ENCODE measurements at regions of chr2 and their contacts with region 1.

Region 1: DNA sequence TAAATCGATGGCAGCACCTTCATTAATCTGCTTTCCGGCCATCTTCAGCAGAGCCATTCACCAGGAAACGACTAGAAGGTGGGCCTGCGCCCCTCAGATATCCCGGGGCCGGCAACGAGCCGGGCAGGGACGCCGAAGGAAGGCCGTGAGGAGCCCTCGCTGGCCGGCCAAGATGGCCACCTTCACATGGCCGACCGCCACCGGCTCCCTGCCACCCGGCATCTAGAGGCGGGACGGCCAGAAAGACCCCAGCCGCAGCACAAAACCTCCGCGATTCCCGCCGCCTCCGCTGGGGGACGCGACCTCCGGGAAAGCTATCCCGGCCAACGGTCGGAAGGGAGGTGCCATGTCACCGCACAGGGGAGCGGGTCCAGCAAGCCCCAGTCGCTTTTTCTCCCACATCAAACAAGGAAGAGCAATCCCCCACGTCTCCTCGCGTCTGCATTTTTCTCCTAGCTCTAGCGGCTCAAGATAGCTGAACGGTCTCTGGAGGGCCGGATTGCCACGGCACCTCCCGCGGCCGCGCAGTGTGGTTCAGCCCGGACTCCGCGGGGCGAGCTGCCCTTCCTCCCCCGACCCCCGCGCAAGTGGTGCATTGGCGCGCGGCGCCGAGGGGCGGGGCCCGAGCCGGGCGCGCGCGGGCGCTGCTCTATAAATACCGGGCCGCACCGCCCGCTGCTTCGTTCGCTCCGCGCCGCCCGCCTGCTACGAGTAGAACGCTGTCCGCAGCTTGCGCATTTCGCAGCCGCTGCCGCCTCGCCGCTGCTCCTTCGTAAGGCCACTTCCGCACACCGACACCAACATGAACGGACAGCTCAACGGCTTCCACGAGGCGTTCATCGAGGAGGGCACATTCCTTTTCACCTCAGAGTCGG is at the start of gene MAT2A:
- DNase-seq: peak; percentile 98
- ATAC-seq: peak; percentile 77
- H3K4me3 Mint-ChIP-seq: peak within 1 kb of the TSS; percentile 97
- H3K27ac Mint-ChIP-seq: peak within 1 kb of the TSS; percentile 99
- H3K4me1 Mint-ChIP-seq: peaks cover 50% of the 10 kb centered on the region
- H3K27me3 Mint-ChIP-seq: no peaks in the 10 kb centered on the region
- CTCF ChIP-seq: peak; percentile 45
- total RNA-seq, gene MAT2A: 208 to 222 TPM (median 208 TPM) in 3 replicates

Region 2: DNA sequence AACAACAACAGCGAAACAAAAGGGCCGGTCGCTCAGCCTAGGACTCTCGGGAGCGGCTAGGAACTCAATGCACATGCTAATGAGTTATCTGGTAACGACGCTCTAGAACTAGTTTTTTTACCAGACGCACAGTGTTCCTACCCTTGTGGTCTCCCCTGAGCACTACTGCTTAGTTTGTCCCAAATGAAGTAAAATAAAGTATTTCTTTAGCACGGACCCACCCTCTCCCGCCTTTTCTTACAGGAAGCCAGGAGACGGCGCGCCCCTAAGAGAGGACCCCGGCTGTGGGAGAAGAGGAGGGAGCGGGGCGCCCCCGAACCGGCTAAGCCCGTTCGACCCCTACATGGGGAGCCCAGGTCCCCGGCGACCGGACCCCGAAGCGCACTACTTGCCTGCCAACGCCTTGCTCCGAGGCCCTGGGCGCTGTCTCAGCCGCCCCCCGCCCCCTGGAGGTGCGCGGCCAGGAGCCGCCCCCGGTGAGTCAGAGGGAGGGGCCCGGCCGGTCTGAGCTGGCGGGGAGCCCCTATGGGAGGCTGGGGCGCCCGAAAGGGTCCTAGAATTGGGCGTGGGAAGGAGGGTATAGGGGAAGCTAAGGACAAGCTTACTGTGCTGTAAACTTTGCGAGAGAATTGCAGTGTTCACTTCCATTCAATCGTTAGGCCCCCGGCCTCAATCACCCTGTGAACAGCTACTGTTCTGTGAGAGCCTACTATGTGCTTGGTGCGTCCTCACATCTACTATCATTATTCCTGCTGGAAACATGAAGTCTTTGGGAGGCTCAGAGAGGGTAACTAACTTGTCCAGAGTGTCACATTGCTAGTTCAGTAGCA is 124.9 kb before region 1 on chr2:
- CTCF ChIA-PET with region 1: interaction called, 15 read pairs
- POLR2A ChIA-PET with region 1: interaction called, 36 read pairs
- DNase-seq: peak; percentile 58
- ATAC-seq: peak; percentile 36
- H3K4me3 Mint-ChIP-seq: peak overlapping the region; percentile 93
- H3K27ac Mint-ChIP-seq: peak overlapping the region; percentile 92
- H3K4me1 Mint-ChIP-seq: peaks cover 43% of the 10 kb centered on the region
- H3K27me3 Mint-ChIP-seq: no peaks in the 10 kb centered on the region
- CTCF ChIP-seq: no peak

Region 3: GRCh38 chr2:85430752-85431569 is 107.8 kb before region 1 on chr2:
- CTCF ChIA-PET with region 1: interaction called, 7 read pairs
- POLR2A ChIA-PET with region 1: interaction called, 54 read pairs
- DNase-seq: peak; percentile 88
- ATAC-seq: peak; percentile 80
- H3K4me3 Mint-ChIP-seq: peak overlapping the region; percentile 48
- H3K27ac Mint-ChIP-seq: no peak overlapping the region; the same call in 1 of the 2 replicates
- H3K4me1 Mint-ChIP-seq: peaks cover 57% of the 10 kb centered on the region
- H3K27me3 Mint-ChIP-seq: peaks cover 21% of the 10 kb centered on the region
- CTCF ChIP-seq: no peak

Region 4: DNA sequence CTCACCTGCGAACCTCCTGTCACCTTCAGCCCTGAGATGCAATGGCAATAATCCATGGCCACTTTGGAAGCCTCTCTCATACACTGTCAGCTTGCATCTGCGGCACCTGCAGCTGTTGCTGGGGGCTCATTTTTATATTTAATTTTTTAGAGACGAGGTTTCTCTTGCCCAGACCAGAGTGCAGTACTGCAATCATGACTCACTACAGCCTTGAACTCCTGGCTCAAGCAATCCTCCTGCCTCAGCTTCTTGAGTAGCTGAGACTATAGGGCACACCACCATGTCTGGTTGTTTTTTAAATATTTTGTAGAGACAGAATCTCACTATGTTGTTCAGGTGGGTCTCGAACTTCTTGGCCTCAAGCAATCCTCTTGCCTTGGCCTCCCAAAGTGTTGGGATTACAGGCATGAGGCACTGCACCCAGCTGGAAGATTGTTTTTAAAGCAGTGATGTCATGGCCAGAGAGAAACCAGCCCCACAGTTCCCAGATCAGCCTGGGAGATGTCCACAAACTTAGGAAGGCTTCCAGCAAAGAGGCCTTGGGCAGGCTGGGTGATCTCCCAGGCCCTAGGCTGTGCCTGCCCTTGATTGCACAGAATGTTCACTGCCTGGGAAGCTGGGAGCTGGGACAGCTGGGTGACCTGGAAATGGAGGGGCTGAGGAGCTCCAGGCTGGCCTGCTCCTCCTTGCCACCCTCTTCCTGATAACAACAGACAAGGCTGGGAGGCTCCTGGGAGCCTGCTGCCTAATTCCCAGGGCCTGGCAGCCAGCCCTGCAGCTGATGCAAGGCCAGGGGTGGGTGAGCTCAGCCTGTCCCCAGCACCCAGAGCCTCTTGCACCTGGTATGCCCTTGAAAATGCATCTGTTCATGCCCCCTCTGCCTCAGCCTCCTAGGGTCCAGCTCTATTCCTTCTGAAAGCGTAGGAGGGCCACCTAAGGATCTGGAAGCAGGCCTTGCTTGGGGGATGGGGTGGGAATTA is 93.1 kb before region 1 on chr2:
- CTCF ChIA-PET with region 1: no interaction called
- POLR2A ChIA-PET with region 1: interaction called, 10 read pairs
- DNase-seq: no peak
- ATAC-seq: no peak
- H3K4me3 Mint-ChIP-seq: no peak overlapping the region
- H3K27ac Mint-ChIP-seq: no peak overlapping the region
- H3K4me1 Mint-ChIP-seq: peaks cover 4% of the 10 kb centered on the region
- H3K27me3 Mint-ChIP-seq: no peaks in the 10 kb centered on the region
- CTCF ChIP-seq: no peak

Region 5: GRCh38 chr2:85501248-85501647 is 37.5 kb before region 1 on chr2:
- CTCF ChIA-PET with region 1: no interaction called
- POLR2A ChIA-PET with region 1: interaction called, 11 read pairs
- DNase-seq: peak; percentile 28
- ATAC-seq: peak; percentile 95
- H3K4me3 Mint-ChIP-seq: no peak overlapping the region
- H3K27ac Mint-ChIP-seq: no peak overlapping the region
- H3K4me1 Mint-ChIP-seq: peaks cover 8% of the 10 kb centered on the region
- H3K27me3 Mint-ChIP-seq: no peaks in the 10 kb centered on the region
- CTCF ChIP-seq: no peak

Region 6: DNA sequence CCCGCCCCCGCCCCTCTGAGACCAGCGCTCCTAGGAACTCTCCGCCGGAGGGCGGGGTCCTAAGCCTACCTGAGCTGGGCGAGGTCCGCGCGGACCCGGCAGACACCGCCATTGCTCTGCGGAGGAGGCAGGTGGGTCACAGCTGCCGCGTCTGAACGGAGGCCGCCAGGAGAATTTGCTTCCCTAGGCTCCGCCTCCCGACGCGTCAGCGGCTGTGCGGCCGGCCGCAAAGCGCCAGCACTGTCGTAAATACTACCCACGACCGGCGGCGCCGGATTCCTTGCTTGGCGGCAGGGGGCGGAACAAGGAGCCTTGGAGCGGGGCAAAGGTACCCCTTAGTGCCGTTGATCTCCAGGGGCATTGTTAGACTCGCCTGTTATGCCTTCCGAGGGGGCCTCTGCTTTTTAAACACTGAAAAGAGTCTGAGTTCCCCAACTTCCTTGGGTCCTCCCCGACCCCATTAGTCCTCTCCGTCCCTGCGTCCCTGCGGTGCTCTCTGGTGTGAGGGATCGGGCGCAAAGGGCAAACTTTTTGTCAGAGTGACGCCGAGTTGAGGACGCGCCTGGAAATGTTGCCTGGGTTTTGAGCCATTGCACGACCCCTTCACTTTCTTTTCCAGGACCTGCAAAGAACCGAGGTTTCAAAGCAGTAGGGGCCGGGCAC is 22.7 kb after region 1 on chr2 and contains the start of gene GGCX:
- CTCF ChIA-PET with region 1: no interaction called
- POLR2A ChIA-PET with region 1: interaction called, 19 read pairs
- DNase-seq: peak; percentile 98
- ATAC-seq: peak; percentile 97
- H3K4me3 Mint-ChIP-seq: peak within 1 kb of the TSS; percentile 94
- H3K27ac Mint-ChIP-seq: peak within 1 kb of the TSS; percentile 98
- H3K4me1 Mint-ChIP-seq: peaks cover 6% of the 10 kb centered on the region
- H3K27me3 Mint-ChIP-seq: peaks cover 7% of the 10 kb centered on the region; the same call in 1 of the 2 replicates
- CTCF ChIP-seq: no peak
- total RNA-seq, gene GGCX: 40.9 to 42.9 TPM (median 41.4 TPM) in 3 replicates

Measured in WTC11 (cell line).